Esophagus muscularis mucosa (tissue), 4 donors: ENCODE measurements at regions of chr2 and their contacts with region 1.

Region 1: GRCh38 chr2:160994141-160995002 is 165.9 kb upstream of the TANK start:
- DNase-seq: peak; percentile 96
- H3K4me3 ChIP-seq: peak overlapping the region in 2 of 4 donors; percentile 5 to 15
- H3K27ac ChIP-seq: no peak overlapping the region
- H3K4me1 ChIP-seq: peaks cover 7 to 19% (median 9%) of the 10 kb centered on the region in 4 donors
- H3K27me3 ChIP-seq: no peaks in the 10 kb centered on the region
- CTCF ChIP-seq: peak; percentile 87 to 92 (median 91)
- EP300 ChIP-seq: no peak
- POLR2A ChIP-seq: no peak

Region 2: DNA sequence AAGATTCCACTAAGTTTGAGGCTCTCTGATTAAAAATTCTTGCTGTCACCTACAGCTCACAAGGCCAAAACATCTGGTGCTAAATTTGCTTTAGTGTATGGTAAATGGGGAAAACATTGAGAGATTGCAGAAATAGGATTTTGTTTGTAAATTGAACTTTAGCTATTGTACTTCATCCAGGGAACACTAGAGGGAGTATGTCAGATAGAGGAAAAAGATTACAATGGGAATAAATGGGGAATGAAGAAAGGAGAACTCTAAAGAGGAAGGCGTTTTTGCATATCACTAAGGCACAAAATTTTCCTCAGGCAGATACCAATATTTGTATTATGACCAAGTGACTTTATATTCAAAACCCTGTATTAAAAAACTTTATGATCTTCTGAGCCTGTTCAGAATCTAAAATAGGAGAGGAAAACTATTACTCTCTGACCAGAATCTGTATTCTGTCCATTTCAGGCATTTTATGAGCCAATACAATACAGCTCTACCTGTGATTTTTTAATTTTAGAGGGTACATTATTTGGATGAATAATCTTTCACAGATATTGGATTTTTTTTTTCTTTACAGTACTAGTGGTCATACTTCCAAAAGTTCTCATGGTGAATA is 742.0 kb before region 1 on chr2:
- intact Hi-C with region 1: loop called (anchors 5 kb)
- DNase-seq: no peak
- H3K4me3 ChIP-seq: no peak overlapping the region
- H3K27ac ChIP-seq: peak overlapping the region in 3 of 4 donors; percentile 8 to 39 (median 15)
- H3K4me1 ChIP-seq: peaks cover 13 to 15% (median 14%) of the 10 kb centered on the region in 4 donors
- H3K27me3 ChIP-seq: no peaks in the 10 kb centered on the region
- CTCF ChIP-seq: peak; percentile 78 to 87 (median 80)
- EP300 ChIP-seq: no peak
- POLR2A ChIP-seq: no peak

Region 3: GRCh38 chr2:161116509-161116908 is 122.1 kb after region 1 on chr2:
- intact Hi-C with region 1: no loop called
- DNase-seq: no peak
- H3K4me3 ChIP-seq: no peak overlapping the region
- H3K27ac ChIP-seq: no peak overlapping the region
- H3K4me1 ChIP-seq: peaks cover 0 to 11% (median 4%) of the 10 kb centered on the region in 4 donors
- H3K27me3 ChIP-seq: no peaks in the 10 kb centered on the region
- CTCF ChIP-seq: no peak
- EP300 ChIP-seq: no peak
- POLR2A ChIP-seq: no peak